AG04450 (cell line): ENCODE measurements at regions of chr10 and their contacts with region 1.

Region 1: GRCh38 chr10:58384999-58385783 is at the start of gene TFAM:
- DNase-seq: peak; percentile 88
- H3K4me3 ChIP-seq: peak within 1 kb of the TSS; percentile 93
- H3K27ac ChIP-seq: peak within 1 kb of the TSS; percentile 74
- H3K27me3 ChIP-seq: no peaks in the 10 kb centered on the region
- CTCF ChIP-seq: peak; percentile 70
- polyA plus RNA-seq, gene TFAM: 14.1 and 17.0 TPM in 2 replicates

Region 2: GRCh38 chr10:58003945-58004344 is 381.2 kb before region 1 on chr10:
- CTCF ChIA-PET with region 1: no interaction called
- POLR2A ChIA-PET with region 1: no interaction called
- DNase-seq: no peak
- H3K4me3 ChIP-seq: no peak overlapping the region
- H3K27ac ChIP-seq: no peak overlapping the region
- H3K27me3 ChIP-seq: no peaks in the 10 kb centered on the region
- CTCF ChIP-seq: no peak

Region 3: DNA sequence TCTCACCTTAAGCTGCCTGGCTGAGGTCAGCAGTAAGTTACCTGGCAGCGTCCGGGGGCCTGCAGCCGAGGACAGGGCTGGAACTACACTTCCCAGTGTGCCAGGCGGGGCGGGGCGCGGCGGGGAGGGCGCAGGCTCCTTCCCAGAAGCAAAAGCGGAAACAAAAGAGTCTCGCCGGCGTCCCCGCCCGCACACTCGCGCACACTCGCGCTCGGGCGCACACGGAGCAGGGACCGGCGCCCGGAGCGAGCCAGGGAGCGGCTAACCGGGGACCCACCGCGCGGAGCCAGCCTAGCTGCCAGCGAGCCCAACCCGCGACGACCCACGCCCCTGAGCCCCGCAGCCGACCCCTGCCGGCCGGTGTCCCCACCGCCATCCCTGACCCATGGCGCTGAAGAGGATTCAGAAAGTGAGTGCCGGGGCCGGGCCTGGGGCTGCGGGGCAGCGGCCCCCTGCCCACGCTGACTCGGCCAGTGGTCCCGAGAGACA is 50.3 kb before region 1 on chr10 and contains the start of gene UBE2D1:
- CTCF ChIA-PET with region 1: interaction called, 6 read pairs
- POLR2A ChIA-PET with region 1: interaction called, 13 read pairs
- DNase-seq: no peak
- H3K4me3 ChIP-seq: peak within 1 kb of the TSS; percentile 77
- H3K27ac ChIP-seq: no peak within 1 kb of the TSS
- H3K27me3 ChIP-seq: peaks cover 1% of the 10 kb centered on the region
- CTCF ChIP-seq: no peak; the same call in 1 of the 2 replicates
- polyA plus RNA-seq, gene UBE2D1: 24.3 and 36.1 TPM in 2 replicates

Region 4: DNA sequence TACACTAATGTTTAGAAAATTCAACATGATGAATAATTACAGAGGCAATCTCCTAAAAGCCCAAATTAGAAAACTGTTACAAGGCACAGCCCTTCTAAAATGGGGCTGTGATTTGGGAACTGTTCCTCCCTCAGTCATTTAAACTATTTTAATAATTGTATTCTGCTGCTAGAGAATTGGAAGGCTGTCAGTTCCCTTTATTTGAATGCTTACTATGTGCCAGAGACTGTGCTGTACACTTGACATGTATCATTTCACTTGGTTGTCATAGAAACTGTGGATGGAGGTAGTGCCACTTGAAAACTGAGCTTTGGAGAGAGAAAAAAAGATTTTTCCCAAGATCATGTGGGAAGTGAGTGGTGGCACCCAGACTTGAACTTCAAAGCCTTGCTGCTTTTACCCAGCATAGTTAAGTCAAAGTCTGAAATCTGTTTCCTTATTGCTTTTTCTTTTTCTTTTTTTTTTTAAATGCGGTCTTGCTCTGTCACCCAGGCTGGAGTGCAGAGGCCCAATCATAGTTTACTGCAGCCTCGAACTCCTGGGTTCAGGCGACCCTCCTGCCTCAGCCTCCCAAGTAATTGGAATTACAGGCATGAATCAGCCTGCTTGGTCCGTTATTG is 26.8 kb before region 1 on chr10:
- CTCF ChIA-PET with region 1: interaction called, 10 read pairs
- POLR2A ChIA-PET with region 1: no interaction called
- DNase-seq: no peak
- H3K4me3 ChIP-seq: no peak overlapping the region
- H3K27ac ChIP-seq: no peak overlapping the region
- H3K27me3 ChIP-seq: no peaks in the 10 kb centered on the region
- CTCF ChIP-seq: no peak